Mucosa of descending colon (tissue), 3 donors: ENCODE measurements at regions of chr3 and their contacts with region 1.

Region 1: GRCh38 chr3:195204360-195205163 is 66.4 kb downstream of the XXYLT1 start:
- DNase-seq: no peak
- ATAC-seq: peak; percentile 38
- H3K4me3 ChIP-seq: no peak overlapping the region
- H3K4me1 ChIP-seq: peaks cover 10% of the 10 kb centered on the region
- CTCF ChIP-seq: no peak

Region 2: GRCh38 chr3:195147649-195148095 is 56.9 kb before region 1 on chr3:
- intact Hi-C with region 1: loop called in 1 of 2 experiments (anchors 10 kb)
- DNase-seq: peak; percentile 61 to 77 (median 69)
- ATAC-seq: peak; percentile 77
- H3K4me3 ChIP-seq: no peak overlapping the region
- H3K4me1 ChIP-seq: peaks cover 9% of the 10 kb centered on the region
- CTCF ChIP-seq: no peak